Heart right ventricle (tissue), 16 donors: ENCODE measurements at regions of chr1 and their contacts with region 1.

Region 1: GRCh38 chr1:45011837-45012638 is at the start of gene UROD:
- DNase-seq: peak; percentile 88 to 94
- ATAC-seq: peak; percentile 89 to 97 (median 95)
- H3K4me3 ChIP-seq: peak within 1 kb of the TSS; percentile 75 to 100 (median 96)
- H3K27ac ChIP-seq: peak within 1 kb of the TSS in 9 of 10 donors; percentile 59 to 88 (median 82)
- H3K4me1 ChIP-seq: peaks cover 20 to 51% (median 35%) of the 10 kb centered on the region in 9 donors
- H3K27me3 ChIP-seq: no peaks in the 10 kb centered on the region
- CTCF ChIP-seq: no peak
- total RNA-seq, gene UROD: 68.1 to 94.0 (median 83.1) TPM

Region 2: GRCh38 chr1:44775078-44775929 is 236.7 kb before region 1 on chr1 and contains the start of gene RPS8:
- intact Hi-C with region 1: loop called in 1 of 10 experiments (anchors 5 kb)
- DNase-seq: peak; percentile 86 to 95
- ATAC-seq: peak; percentile 89 to 96 (median 94)
- H3K4me3 ChIP-seq: peak within 1 kb of the TSS; percentile 51 to 98 (median 84)
- H3K27ac ChIP-seq: peak within 1 kb of the TSS; percentile 68 to 98 (median 96)
- H3K4me1 ChIP-seq: peaks cover 2 to 43% (median 31%) of the 10 kb centered on the region in 9 donors
- H3K27me3 ChIP-seq: no peaks in the 10 kb centered on the region
- CTCF ChIP-seq: no peak
- total RNA-seq, gene RPS8: 587 to 1,039 (median 681) TPM

Region 3: GRCh38 chr1:44799770-44800584 is 212.1 kb before region 1 on chr1 and contains the start of gene PLK3:
- intact Hi-C with region 1: loop called in 4 of 10 experiments (anchors 5 to 10 kb)
- DNase-seq: peak; percentile 96 to 99
- ATAC-seq: peak; percentile 95 to 98 (median 96)
- H3K4me3 ChIP-seq: peak within 1 kb of the TSS; percentile 64 to 98 (median 92)
- H3K27ac ChIP-seq: peak within 1 kb of the TSS; percentile 85 to 100 (median 96)
- H3K4me1 ChIP-seq: peaks cover 11 to 48% (median 41%) of the 10 kb centered on the region in 9 donors
- H3K27me3 ChIP-seq: no peaks in the 10 kb centered on the region
- CTCF ChIP-seq: peak; percentile 92 to 98 (median 96)
- total RNA-seq, gene PLK3: 2.9 to 10.3 (median 6.8) TPM

Region 4: GRCh38 chr1:44835738-44836675 is 176.0 kb before region 1 on chr1:
- intact Hi-C with region 1: loop called in 6 of 10 experiments (anchors 2 to 10 kb)
- DNase-seq: peak; percentile 85 to 87
- ATAC-seq: peak; percentile 78 to 89 (median 84)
- H3K4me3 ChIP-seq: no peak overlapping the region
- H3K27ac ChIP-seq: peak overlapping the region in 1 of 10 donors; percentile 8
- H3K4me1 ChIP-seq: peaks cover 0 to 19% (median 0%) of the 10 kb centered on the region in 9 donors
- H3K27me3 ChIP-seq: no peaks in the 10 kb centered on the region
- CTCF ChIP-seq: peak; percentile 74 to 96 (median 86)

Region 5: DNA sequence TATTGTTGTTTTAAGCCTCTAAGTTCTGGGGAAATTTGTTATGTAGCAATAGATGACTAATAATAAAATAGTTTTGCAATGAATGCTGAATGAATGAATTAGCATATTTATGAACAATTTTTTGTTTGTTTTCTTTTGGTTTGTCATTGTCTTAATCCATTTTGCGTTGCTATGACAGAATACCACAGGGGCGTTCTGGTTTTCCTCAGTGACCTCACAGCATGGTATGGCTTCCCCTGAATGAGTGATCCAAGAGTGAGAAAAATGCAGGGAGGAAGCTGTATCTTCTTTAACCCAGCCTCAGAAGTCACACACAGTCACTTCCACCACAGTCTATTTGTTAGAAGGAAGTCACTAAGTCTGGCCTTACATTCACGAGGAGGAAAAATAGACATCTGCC is 260.9 kb after region 1 on chr1:
- intact Hi-C with region 1: no loop called
- DNase-seq: no peak
- ATAC-seq: no peak
- H3K4me3 ChIP-seq: no peak overlapping the region
- H3K27ac ChIP-seq: no peak overlapping the region
- H3K4me1 ChIP-seq: peaks cover 0 to 8% (median 0%) of the 10 kb centered on the region in 9 donors
- H3K27me3 ChIP-seq: no peaks in the 10 kb centered on the region
- CTCF ChIP-seq: no peak

Region 6: GRCh38 chr1:45490626-45491486 is 478.8 kb after region 1 on chr1 and contains the start of gene TESK2:
- intact Hi-C with region 1: loop called (anchors 2 to 10 kb)
- DNase-seq: peak; percentile 95 to 97
- ATAC-seq: peak; percentile 97 to 99 (median 98)
- H3K4me3 ChIP-seq: peak within 1 kb of the TSS; percentile 62 to 96 (median 86)
- H3K27ac ChIP-seq: peak within 1 kb of the TSS in 9 of 10 donors; percentile 35 to 83 (median 76)
- H3K4me1 ChIP-seq: peaks cover 0 to 29% (median 10%) of the 10 kb centered on the region in 9 donors
- H3K27me3 ChIP-seq: no peaks in the 10 kb centered on the region
- CTCF ChIP-seq: peak in 4 of 9 donors; percentile 8 to 29 (median 19)
- total RNA-seq, gene TESK2: 0.77 to 2.6 (median 1.3) TPM

Region 7: GRCh38 chr1:45583264-45583665 is 571.2 kb after region 1 on chr1:
- intact Hi-C with region 1: loop called in 2 of 10 experiments (anchors 5 to 10 kb)
- DNase-seq: peak; percentile 94 to 97
- ATAC-seq: peak; percentile 91 to 95 (median 93)
- H3K4me3 ChIP-seq: peak overlapping the region; percentile 80 to 100 (median 99)
- H3K27ac ChIP-seq: peak overlapping the region; percentile 86 to 96 (median 94)
- H3K4me1 ChIP-seq: peaks cover 6 to 39% (median 20%) of the 10 kb centered on the region in 9 donors
- H3K27me3 ChIP-seq: no peaks in the 10 kb centered on the region
- CTCF ChIP-seq: no peak